ENCODE measurements at regions of chr11 and their contacts with region 1.

Region 1: GRCh38 chr11:83819933-83820549 is 533.9 kb upstream of the CCDC90B start:
- DNase-seq: no peak
- H3K4me3 Mint-ChIP-seq: no peak overlapping the region
- H3K27ac Mint-ChIP-seq: no peak overlapping the region
- H3K4me1 Mint-ChIP-seq: no peaks in the 10 kb centered on the region
- H3K27me3 Mint-ChIP-seq: no peaks in the 10 kb centered on the region

Region 2: DNA sequence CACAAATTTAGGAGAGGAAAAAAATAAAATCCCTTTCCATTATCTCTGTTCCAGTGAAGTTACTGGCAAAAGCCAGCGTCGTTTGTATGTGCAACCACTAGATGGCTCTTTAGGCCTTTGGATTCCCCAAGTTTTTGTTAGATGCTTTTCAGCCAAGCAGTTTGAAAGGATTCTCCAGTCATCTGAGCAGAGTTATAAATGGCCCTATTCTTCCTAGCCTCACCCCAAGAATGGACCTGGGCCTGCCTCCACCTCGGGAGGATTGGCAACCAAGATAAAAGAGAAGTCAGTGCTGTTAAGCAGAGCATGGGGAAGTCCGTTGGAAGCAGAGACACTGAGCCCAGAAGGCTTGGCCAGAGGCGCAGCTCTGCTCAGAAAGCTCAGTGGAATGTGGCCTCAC is 1101.7 kb before region 1 on chr11:
- CTCF ChIA-PET with region 1: interaction called, 4 read pairs
- intact Hi-C with region 1: loop called (anchors 1 kb)
- DNase-seq: peak; percentile 44
- H3K4me3 Mint-ChIP-seq: no peak overlapping the region
- H3K27ac Mint-ChIP-seq: no peak overlapping the region
- H3K4me1 Mint-ChIP-seq: peaks cover 4% of the 10 kb centered on the region
- H3K27me3 Mint-ChIP-seq: no peaks in the 10 kb centered on the region

Region 3: DNA sequence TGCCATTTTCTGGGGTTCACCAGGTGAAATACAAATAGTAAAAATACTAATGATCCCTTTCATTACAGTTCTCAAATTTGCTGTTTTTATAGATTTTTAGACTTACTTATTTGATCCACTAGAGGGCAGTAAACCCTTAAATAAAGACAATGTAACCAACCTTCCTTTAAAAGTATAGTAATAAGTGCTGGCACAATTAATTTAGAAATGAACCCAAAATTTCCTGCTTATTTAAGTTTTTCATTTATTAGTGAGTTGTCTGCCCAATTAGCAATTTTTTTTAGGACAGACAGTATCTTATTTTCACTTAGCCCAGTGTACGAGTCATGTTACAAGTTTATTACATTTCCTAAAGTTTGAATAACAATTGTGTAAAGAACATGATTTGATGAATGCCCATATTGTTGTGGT is 913.8 kb before region 1 on chr11:
- CTCF ChIA-PET with region 1: no interaction called
- intact Hi-C with region 1: loop called (anchors 1 kb)
- DNase-seq: no peak
- H3K4me3 Mint-ChIP-seq: no peak overlapping the region
- H3K27ac Mint-ChIP-seq: no peak overlapping the region
- H3K4me1 Mint-ChIP-seq: peaks cover 61% of the 10 kb centered on the region
- H3K27me3 Mint-ChIP-seq: no peaks in the 10 kb centered on the region

Region 4: DNA sequence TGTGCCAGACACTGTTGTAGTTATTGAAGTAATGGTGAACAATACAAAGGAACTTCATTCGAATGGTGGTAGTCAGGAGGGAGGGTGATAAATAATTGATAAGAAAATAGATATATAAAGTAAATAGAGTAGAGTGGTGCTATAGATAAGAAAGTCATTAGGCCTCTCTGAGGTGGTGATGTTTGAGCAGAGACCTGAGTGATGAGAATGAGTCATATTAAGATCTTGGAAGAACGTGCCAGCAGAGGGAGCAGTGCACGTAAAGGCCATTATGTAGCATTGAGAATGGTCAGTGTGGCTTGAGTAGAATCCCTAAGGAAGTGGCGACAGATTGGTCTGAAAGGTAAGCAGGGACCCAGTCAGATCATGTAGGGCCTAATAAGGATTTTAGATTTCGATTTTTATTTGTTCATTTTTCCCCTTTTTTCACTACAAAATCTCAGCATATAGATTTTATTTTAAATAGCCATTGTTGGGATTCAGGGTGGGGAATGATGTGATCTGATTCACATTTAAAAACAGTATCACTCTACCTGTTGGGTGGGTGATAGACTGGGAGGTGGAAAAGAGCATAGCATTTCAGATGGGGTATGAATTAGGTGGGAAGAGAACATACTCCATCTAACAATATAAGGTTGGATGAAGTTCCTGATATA is 578.6 kb before region 1 on chr11:
- CTCF ChIA-PET with region 1: no interaction called
- intact Hi-C with region 1: loop called (anchors 2 kb)
- DNase-seq: peak; percentile 30
- H3K4me3 Mint-ChIP-seq: no peak overlapping the region
- H3K27ac Mint-ChIP-seq: no peak overlapping the region
- H3K4me1 Mint-ChIP-seq: no peaks in the 10 kb centered on the region
- H3K27me3 Mint-ChIP-seq: no peaks in the 10 kb centered on the region

Region 5: GRCh38 chr11:83292709-83293456 is 527.2 kb before region 1 on chr11:
- CTCF ChIA-PET with region 1: interaction called, 16 read pairs
- intact Hi-C with region 1: loop called (anchors 1 kb)
- DNase-seq: peak; percentile 57
- H3K4me3 Mint-ChIP-seq: peak overlapping the region; percentile 58
- H3K27ac Mint-ChIP-seq: no peak overlapping the region
- H3K4me1 Mint-ChIP-seq: peaks cover 11% of the 10 kb centered on the region
- H3K27me3 Mint-ChIP-seq: peaks cover 2% of the 10 kb centered on the region

Region 6: DNA sequence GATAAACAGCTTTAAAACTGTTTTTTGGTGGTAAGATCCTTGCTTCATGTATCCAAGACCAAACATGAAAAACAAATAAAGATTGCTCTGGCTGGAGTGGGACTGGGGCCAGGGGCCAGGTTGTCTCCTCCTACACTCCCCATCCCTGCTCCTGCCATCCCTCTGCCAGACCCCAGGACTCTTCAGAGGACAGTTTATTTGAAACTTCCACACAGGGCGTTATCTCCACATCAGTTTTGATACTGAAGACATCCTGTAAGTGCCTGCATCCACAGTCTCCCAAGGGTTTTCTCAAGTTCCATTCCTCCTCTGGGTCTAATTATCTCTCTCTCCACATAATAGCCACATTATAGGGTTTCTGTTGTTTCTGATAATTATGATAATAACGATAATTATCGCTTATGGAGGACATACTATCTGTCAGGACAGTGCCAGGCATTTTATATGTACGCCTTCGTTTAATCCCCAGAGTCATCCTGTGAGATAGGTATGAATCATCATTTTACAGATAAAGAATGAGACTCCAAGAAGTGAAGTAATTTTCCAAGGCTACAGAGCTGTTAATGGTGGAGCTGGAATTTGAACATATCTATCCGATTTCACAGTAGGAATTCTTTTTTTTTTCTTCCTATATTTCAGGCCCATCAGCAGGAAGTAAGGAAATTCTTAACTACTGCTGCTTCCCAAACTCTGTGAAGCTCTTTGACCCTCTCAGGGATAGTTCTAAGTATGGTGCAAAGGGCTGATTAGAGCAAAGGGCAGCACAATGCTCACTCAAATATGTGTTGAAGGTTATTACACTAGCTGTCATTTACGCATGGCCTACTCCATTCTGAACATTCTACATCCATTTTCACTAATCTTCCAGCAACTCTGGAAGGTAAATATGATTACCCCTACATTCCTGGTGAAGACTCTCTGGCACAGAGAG is 45.8 kb before region 1 on chr11:
- CTCF ChIA-PET with region 1: no interaction called
- intact Hi-C with region 1: no loop called
- DNase-seq: no peak
- H3K4me3 Mint-ChIP-seq: no peak overlapping the region
- H3K27ac Mint-ChIP-seq: no peak overlapping the region
- H3K4me1 Mint-ChIP-seq: no peaks in the 10 kb centered on the region
- H3K27me3 Mint-ChIP-seq: peaks cover 4% of the 10 kb centered on the region

Region 7: GRCh38 chr11:83951474-83951873 is 131.4 kb after region 1 on chr11:
- CTCF ChIA-PET with region 1: no interaction called
- intact Hi-C with region 1: no loop called
- DNase-seq: no peak
- H3K4me3 Mint-ChIP-seq: no peak overlapping the region
- H3K27ac Mint-ChIP-seq: no peak overlapping the region
- H3K4me1 Mint-ChIP-seq: no peaks in the 10 kb centered on the region
- H3K27me3 Mint-ChIP-seq: no peaks in the 10 kb centered on the region